HepG2 (cell line): ENCODE measurements at regions of chr2 and their contacts with region 1.

Region 1: GRCh38 chr2:101197215-101197745 is 46.1 kb upstream of the TBC1D8 start:
- DNase-seq: peak; percentile 42
- ATAC-seq: peak; percentile 25
- H3K4me3 ChIP-seq: no peak overlapping the region
- H3K27ac ChIP-seq: no peak overlapping the region
- H3K4me1 ChIP-seq: peaks cover 55% of the 10 kb centered on the region
- H3K27me3 ChIP-seq: no peaks in the 10 kb centered on the region; a peak in 2 of 5 replicates
- CTCF ChIP-seq: 0 out of 2 replicates have a peak, but pooled peaks have one; percentile 23
- EP300 ChIP-seq: no peak
- POLR2A ChIP-seq: no peak
- RAD21 ChIP-seq: no peak

Region 2: GRCh38 chr2:100592226-100592625 is 605.1 kb before region 1 on chr2:
- CTCF ChIA-PET with region 1: no interaction called
- POLR2A ChIA-PET with region 1: no interaction called
- in situ Hi-C with region 1: no loop called
- intact Hi-C with region 1: loop called (anchors 10 kb)
- DNase-seq: no peak
- ATAC-seq: no peak
- H3K4me3 ChIP-seq: no peak overlapping the region
- H3K27ac ChIP-seq: no peak overlapping the region
- H3K4me1 ChIP-seq: 0 out of 2 replicates have a peak, but pooled peaks cover 6% of the 10 kb centered on the region
- H3K27me3 ChIP-seq: no peaks in the 10 kb centered on the region
- CTCF ChIP-seq: no peak
- EP300 ChIP-seq: no peak
- POLR2A ChIP-seq: no peak
- RAD21 ChIP-seq: no peak

Region 3: DNA sequence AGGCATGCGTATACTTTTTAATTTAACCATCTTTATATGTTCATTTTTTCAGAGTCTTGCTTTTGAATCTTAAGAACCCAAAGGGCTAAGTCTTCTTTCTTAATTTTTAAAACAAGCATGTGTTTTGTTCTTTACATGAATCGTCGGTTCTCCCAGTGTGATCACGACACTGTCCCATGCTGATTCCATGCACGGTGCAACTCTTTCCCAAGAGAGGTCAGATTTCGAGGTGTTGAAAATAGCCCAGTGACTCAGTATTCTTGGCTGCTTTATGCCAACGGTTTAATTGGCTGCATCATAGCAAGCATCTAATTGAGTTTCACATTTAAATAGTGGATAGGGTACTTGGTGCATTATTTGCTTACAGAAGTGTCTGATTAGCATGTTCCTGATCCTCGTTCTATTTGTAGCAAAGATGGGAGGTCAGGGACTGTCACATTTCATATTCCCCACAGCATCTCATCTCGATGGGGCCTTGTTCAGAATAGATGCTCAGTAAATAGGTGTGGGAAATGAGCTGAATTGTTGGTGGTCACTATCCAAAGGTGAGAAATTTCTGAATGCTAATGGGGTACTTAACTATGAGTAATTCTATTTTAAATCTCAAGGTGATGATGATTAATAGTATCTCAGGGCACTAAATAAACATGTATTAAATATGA is 374.6 kb before region 1 on chr2:
- CTCF ChIA-PET with region 1: no interaction called
- POLR2A ChIA-PET with region 1: no interaction called
- in situ Hi-C with region 1: no loop called
- intact Hi-C with region 1: no loop called
- DNase-seq: peak; percentile 28
- ATAC-seq: no peak
- H3K4me3 ChIP-seq: peak overlapping the region in 2 of 3 experiments; percentile 87 to 96; a peak in 4 of 6 replicates
- H3K27ac ChIP-seq: peak overlapping the region; percentile 1
- H3K4me1 ChIP-seq: peaks cover 75% of the 10 kb centered on the region
- H3K27me3 ChIP-seq: no peaks in the 10 kb centered on the region; a peak in 1 of 5 replicates
- CTCF ChIP-seq: no peak
- EP300 ChIP-seq: no peak
- POLR2A ChIP-seq: no peak
- RAD21 ChIP-seq: no peak

Region 4: DNA sequence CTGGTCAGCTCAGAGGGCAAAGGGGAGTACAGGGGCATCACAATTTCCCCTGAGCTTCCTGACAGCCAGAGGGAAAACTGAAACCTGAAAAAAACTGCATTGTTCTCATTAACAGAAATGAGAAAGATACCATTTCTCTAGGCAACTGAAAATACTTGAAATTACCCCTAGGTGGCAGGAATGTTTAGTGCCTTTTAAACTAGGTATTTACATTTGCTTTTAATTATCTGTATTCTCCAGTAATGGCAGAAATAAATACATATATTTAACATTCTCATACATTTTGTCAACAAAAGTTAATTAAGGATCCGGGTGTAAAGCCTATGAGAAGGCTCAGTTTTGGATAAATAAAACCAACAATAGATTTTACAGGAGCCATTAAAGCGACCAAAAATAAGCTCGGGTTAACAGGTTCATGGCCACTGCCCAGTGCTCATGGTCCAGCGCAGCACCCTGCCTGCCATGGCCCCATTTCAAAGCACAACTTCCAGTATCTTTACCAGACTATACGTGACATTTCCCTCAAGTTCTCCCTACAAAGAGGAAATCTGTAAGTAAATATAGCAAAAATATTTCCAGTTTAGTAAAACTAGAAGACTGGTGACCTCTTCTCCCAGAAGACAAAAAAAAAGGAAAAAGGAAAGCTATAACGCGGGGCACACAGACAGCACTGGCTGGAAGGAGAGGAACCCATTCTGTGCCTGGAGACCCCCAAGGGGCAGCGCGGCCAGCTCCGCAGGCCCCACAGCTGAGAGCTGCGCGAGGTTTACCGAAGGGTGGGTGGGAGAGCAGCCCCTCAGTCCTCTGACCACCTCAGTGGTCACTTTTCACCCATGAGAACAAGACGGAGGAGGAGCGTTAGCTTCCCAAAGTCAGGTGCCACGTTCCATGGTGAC is 160.5 kb before region 1 on chr2:
- CTCF ChIA-PET with region 1: no interaction called
- POLR2A ChIA-PET with region 1: no interaction called
- in situ Hi-C with region 1: no loop called
- intact Hi-C with region 1: loop called (anchors 2 kb)
- DNase-seq: peak; percentile 33
- ATAC-seq: no peak
- H3K4me3 ChIP-seq: no peak overlapping the region
- H3K27ac ChIP-seq: no peak overlapping the region
- H3K4me1 ChIP-seq: no peaks in the 10 kb centered on the region
- H3K27me3 ChIP-seq: no peaks in the 10 kb centered on the region
- CTCF ChIP-seq: peak; percentile 56
- EP300 ChIP-seq: no peak
- POLR2A ChIP-seq: no peak
- RAD21 ChIP-seq: peak; percentile 69

Region 5: DNA sequence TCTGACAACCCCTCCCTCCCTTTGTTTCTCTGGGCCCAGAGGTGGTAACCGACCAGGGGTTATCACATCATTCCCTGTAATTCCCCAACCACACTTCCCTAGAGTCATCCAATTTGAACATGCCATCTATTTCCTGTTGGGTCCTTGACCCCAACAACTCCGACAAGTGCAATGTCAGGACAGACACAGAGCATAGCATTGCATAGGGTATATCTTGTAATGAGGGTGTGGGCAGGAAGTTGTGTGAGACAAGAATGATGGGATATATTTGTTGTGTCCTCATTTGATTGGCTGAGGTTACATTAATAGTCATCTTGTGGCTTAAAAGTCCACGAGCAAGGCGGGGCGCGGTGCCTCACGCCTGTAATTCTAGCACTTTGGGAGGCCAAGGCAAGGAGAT is 22.0 kb after region 1 on chr2:
- CTCF ChIA-PET with region 1: no interaction called
- POLR2A ChIA-PET with region 1: no interaction called
- in situ Hi-C with region 1: no loop called
- intact Hi-C with region 1: no loop called
- DNase-seq: no peak
- ATAC-seq: no peak
- H3K4me3 ChIP-seq: no peak overlapping the region
- H3K27ac ChIP-seq: no peak overlapping the region
- H3K4me1 ChIP-seq: peaks cover 38% of the 10 kb centered on the region
- H3K27me3 ChIP-seq: no peaks in the 10 kb centered on the region
- CTCF ChIP-seq: no peak
- EP300 ChIP-seq: no peak
- POLR2A ChIP-seq: no peak
- RAD21 ChIP-seq: no peak

Region 6: DNA sequence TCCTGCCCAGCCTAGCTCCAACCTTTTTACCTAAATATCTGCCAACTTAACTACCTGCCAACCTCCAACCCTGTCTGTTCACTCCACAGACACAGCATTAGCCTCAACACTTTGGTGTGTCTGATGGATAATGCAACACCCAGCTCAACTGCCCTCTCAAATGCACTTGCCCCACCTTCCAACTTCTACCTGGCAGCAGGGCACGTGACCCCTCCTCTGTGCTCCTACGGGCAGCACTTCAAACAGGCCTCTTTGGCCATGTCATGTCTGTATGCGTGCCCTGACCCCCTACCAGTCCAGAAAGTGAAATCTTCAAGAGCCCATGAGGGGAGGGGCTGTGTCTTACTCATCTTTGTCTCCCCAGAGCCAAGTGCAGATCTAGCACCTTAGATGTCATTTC is 85.7 kb after region 1 on chr2:
- CTCF ChIA-PET with region 1: no interaction called
- POLR2A ChIA-PET with region 1: no interaction called
- in situ Hi-C with region 1: no loop called
- intact Hi-C with region 1: no loop called
- DNase-seq: no peak
- ATAC-seq: no peak
- H3K4me3 ChIP-seq: no peak overlapping the region
- H3K27ac ChIP-seq: no peak overlapping the region
- H3K4me1 ChIP-seq: peaks cover 14% of the 10 kb centered on the region
- H3K27me3 ChIP-seq: no peaks in the 10 kb centered on the region
- CTCF ChIP-seq: no peak
- EP300 ChIP-seq: no peak
- POLR2A ChIP-seq: no peak
- RAD21 ChIP-seq: no peak

Region 7: DNA sequence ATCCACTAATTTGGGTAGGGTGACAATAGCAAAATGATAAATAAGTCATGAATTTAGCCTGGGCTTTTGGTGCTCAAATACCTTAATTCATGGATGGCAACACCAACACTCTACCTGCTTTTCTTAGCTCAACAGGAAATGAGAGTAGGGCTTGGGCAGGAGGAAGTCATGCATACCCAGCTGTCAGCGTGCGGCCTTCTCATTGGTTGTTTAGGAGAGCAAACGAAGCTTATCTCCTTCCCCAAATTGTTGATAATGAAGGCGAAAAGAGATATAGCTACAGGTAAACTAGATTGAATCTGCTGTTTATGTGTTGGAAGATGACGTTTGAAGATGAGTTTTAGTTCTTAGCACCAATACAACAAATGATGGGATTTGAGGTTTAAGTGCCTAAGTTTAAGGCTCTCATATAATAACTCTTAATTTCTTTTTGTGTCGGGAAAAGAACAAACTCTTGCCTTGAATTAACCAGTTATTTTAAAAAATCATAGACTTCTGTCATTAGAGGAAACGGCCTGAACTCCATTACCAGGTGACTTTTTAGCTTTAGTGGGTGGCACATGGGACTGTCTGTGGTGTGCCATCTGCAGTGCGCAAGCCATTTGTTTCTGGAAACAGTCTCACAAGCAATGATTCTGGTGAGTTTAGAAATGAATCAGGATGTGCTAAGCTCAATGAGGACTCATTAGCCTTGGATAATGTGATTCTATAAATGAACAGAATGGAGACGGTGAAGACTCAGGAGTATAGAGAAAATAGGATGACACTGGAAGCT is 520.0 kb after region 1 on chr2:
- CTCF ChIA-PET with region 1: no interaction called
- POLR2A ChIA-PET with region 1: no interaction called
- in situ Hi-C with region 1: no loop called
- intact Hi-C with region 1: no loop called
- DNase-seq: no peak
- ATAC-seq: no peak
- H3K4me3 ChIP-seq: no peak overlapping the region
- H3K27ac ChIP-seq: no peak overlapping the region
- H3K4me1 ChIP-seq: peaks cover 75% of the 10 kb centered on the region
- H3K27me3 ChIP-seq: no peaks in the 10 kb centered on the region
- CTCF ChIP-seq: no peak
- EP300 ChIP-seq: no peak
- POLR2A ChIP-seq: no peak
- RAD21 ChIP-seq: no peak